Psoas muscle (tissue), 8 donors: ENCODE measurements at regions of chr9 and their contacts with region 1.

Region 1: GRCh38 chr9:130023144-130023787 is 19.7 kb downstream of the FNBP1 start:
- DNase-seq: no peak
- ATAC-seq: peak; percentile 24 to 60 (median 48)
- H3K4me3 ChIP-seq: no peak overlapping the region
- H3K27ac ChIP-seq: peak overlapping the region; percentile 40
- H3K4me1 ChIP-seq: peaks cover 57% of the 10 kb centered on the region
- H3K27me3 ChIP-seq: no peaks in the 10 kb centered on the region
- CTCF ChIP-seq: no peak

Region 2: DNA sequence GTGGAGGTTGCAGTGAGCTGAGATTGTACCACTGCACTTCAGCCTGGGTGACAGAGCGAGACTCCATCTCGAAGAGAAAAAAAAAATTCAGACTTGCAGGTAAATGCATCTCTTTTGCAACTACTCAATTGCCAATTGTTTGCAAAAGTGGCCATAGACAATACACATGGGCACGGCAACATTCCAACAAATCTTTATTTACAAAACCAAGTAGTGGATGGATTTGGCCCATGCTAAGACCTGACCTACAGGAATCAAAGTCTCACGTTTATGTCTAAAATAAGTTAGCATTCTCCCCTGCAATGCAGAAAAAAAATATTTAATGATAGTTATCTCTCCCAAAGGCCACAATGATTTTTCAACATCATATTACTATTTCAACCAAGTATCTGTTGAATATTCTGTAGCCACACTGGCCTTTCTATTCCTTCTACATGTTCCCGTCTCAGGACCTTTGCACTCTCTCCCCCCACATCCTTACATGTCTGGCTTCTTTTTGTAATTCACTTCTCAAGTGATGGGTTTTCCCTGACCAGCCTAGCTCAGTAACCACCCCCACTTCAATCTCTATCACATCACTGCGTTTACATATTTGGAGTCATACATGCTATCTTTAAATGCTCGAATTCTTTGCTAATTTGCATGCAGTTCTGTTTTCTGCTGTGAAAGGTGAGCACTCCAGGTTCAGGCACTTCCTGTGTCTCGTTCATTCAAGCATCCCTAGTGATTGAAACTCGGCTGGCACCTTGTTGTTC is 34.5 kb before region 1 on chr9:
- intact Hi-C with region 1: loop called in 1 of 2 experiments (anchors 5 kb)
- DNase-seq: no peak
- ATAC-seq: no peak
- H3K4me3 ChIP-seq: no peak overlapping the region
- H3K27ac ChIP-seq: no peak overlapping the region
- H3K4me1 ChIP-seq: peaks cover 8% of the 10 kb centered on the region
- H3K27me3 ChIP-seq: no peaks in the 10 kb centered on the region
- CTCF ChIP-seq: no peak

Region 3: GRCh38 chr9:130078547-130078946 is 55.3 kb after region 1 on chr9:
- intact Hi-C with region 1: no loop called
- DNase-seq: no peak
- ATAC-seq: no peak
- H3K4me3 ChIP-seq: no peak overlapping the region
- H3K27ac ChIP-seq: no peak overlapping the region
- H3K4me1 ChIP-seq: no peaks in the 10 kb centered on the region
- H3K27me3 ChIP-seq: no peaks in the 10 kb centered on the region
- CTCF ChIP-seq: no peak